CD8-positive, alpha-beta T cell (primary cell): ENCODE measurements at regions of chr12 and their contacts with region 1.

Region 1: GRCh38 chr12:54214553-54215406 is 26.0 kb upstream of the SMUG1 start:
- DNase-seq: peak; percentile 78 to 96 (median 91)
- ATAC-seq: peak; percentile 86
- H3K4me3 ChIP-seq: peak overlapping the region; percentile 34 to 47
- H3K4me3 Mint-ChIP-seq: peak overlapping the region; percentile 72
- H3K27ac ChIP-seq: no peak overlapping the region
- H3K27ac Mint-ChIP-seq: no peak overlapping the region
- H3K4me1 ChIP-seq: peaks cover 30% of the 10 kb centered on the region
- H3K4me1 Mint-ChIP-seq: peaks cover 35% of the 10 kb centered on the region
- H3K27me3 ChIP-seq: peaks cover 0 to 7% of the 10 kb centered on the region in 2 experiments
- H3K27me3 Mint-ChIP-seq: peaks cover 22% of the 10 kb centered on the region
- CTCF ChIP-seq: peak; percentile 99

Region 2: DNA sequence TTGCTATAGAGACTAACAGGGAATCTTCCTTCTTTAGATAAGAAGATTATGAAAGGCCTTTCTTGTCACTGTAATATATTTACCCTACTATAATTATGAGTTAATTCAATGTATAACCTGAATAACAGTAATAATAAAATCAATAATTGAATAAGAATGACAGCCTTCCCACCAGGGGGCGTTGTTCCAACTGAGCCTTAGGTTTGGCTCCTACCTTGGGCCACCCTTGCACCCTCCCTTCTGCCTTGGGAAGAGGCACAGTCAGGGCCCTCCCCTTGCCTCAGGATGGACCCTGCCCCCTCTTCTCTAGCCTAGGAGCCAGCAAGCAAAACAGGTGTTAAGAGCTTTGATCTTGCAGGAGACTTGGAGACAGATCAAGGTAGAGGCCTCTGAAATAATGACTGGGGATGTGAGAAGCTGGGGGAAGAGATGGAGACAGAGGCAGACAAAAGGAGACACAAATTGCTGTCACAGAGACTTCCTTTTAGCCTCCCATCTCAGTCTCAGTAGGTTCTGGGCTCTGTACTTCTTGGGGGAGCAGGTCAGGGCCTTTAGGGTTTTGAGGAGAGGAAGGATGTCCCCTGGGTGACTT is 422.9 kb before region 1 on chr12:
- CTCF ChIA-PET with region 1: no interaction called
- POLR2A ChIA-PET with region 1: no interaction called
- intact Hi-C with region 1: loop called (anchors 5 kb)
- DNase-seq: peak in 8 of 9 experiments; percentile 1 to 53 (median 33)
- ATAC-seq: no peak
- H3K4me3 ChIP-seq: no peak overlapping the region
- H3K4me3 Mint-ChIP-seq: no peak overlapping the region
- H3K27ac ChIP-seq: no peak overlapping the region
- H3K27ac Mint-ChIP-seq: no peak overlapping the region
- H3K4me1 ChIP-seq: no peaks in the 10 kb centered on the region
- H3K4me1 Mint-ChIP-seq: no peaks in the 10 kb centered on the region
- H3K27me3 ChIP-seq: peaks cover 0 to 4% of the 10 kb centered on the region in 2 experiments
- H3K27me3 Mint-ChIP-seq: peaks cover 17% of the 10 kb centered on the region
- CTCF ChIP-seq: peak; percentile 54

Region 3: GRCh38 chr12:54005853-54006686 is 208.7 kb before region 1 on chr12:
- CTCF ChIA-PET with region 1: interaction called, 141 read pairs
- POLR2A ChIA-PET with region 1: no interaction called
- intact Hi-C with region 1: loop called in 1 of 2 experiments (anchors 1 kb)
- DNase-seq: peak; percentile 71 to 92 (median 86)
- ATAC-seq: peak; percentile 80
- H3K4me3 ChIP-seq: peak overlapping the region; percentile 24 to 62
- H3K4me3 Mint-ChIP-seq: peak overlapping the region; percentile 82
- H3K27ac ChIP-seq: no peak overlapping the region
- H3K27ac Mint-ChIP-seq: no peak overlapping the region
- H3K4me1 ChIP-seq: peaks cover 22% of the 10 kb centered on the region
- H3K4me1 Mint-ChIP-seq: peaks cover 25% of the 10 kb centered on the region
- H3K27me3 ChIP-seq: peaks cover 72 to 85% of the 10 kb centered on the region in 2 experiments
- H3K27me3 Mint-ChIP-seq: peaks cover 87% of the 10 kb centered on the region
- CTCF ChIP-seq: peak; percentile 93

Region 4: GRCh38 chr12:54017878-54018467 is 196.8 kb before region 1 on chr12:
- CTCF ChIA-PET with region 1: interaction called, 12 read pairs
- POLR2A ChIA-PET with region 1: no interaction called
- intact Hi-C with region 1: no loop called
- DNase-seq: peak; percentile 53 to 91 (median 70)
- ATAC-seq: peak; percentile 86
- H3K4me3 ChIP-seq: peak overlapping the region; percentile 69 to 71
- H3K4me3 Mint-ChIP-seq: peak overlapping the region; percentile 83
- H3K27ac ChIP-seq: peak overlapping the region in 1 of 2 experiments; percentile 56
- H3K27ac Mint-ChIP-seq: no peak overlapping the region
- H3K4me1 ChIP-seq: peaks cover 16% of the 10 kb centered on the region
- H3K4me1 Mint-ChIP-seq: peaks cover 22% of the 10 kb centered on the region
- H3K27me3 ChIP-seq: peaks cover 41 to 48% of the 10 kb centered on the region in 2 experiments
- H3K27me3 Mint-ChIP-seq: peaks cover 71% of the 10 kb centered on the region
- CTCF ChIP-seq: no peak

Region 5: DNA sequence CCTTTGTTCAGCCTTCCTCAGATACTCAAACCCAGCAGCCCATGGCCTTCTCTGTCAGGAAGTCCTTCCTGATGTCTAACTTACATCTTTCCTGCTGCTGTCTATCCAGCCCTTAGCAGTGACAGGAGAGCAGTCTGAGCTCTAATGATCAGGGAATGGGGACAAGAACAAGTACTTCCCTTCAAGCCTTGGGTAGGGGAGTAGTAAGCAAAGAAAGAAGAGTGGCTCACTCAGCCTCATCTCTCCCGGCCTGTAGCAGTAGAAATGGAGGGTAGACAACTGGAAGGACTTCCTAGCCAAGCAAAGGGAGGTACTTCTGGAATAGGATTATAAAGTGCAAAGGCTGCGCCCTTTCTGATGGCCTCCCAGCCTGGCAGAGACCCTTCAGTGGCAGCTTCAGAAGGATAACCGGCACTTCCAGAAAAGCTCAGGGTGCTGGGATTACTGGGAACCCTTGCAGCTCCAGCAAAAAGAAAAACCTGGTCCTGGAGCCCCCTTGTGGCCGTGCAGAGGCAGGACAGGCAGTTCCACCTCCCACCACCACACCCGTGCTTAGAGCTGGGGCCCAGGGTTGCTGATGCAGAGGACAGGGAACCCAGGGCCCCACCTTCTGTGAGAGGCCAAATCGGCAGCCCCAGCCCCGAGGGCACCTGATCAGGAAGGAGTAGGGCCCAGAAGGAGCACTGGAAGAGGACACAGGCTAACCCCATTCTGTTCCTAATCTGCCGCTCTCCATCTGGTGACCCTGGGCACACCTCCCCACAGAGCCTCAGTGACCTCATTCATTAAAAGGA is 13.6 kb before region 1 on chr12:
- CTCF ChIA-PET with region 1: interaction called, 63 read pairs
- POLR2A ChIA-PET with region 1: interaction called, 3 read pairs
- intact Hi-C with region 1: loop called in 1 of 2 experiments (anchors 1 kb)
- DNase-seq: peak; percentile 35 to 78 (median 62)
- ATAC-seq: peak; percentile 98
- H3K4me3 ChIP-seq: no peak overlapping the region
- H3K4me3 Mint-ChIP-seq: no peak overlapping the region
- H3K27ac ChIP-seq: no peak overlapping the region
- H3K27ac Mint-ChIP-seq: no peak overlapping the region
- H3K4me1 ChIP-seq: no peaks in the 10 kb centered on the region
- H3K4me1 Mint-ChIP-seq: no peaks in the 10 kb centered on the region
- H3K27me3 ChIP-seq: peaks cover 10 to 24% of the 10 kb centered on the region in 2 experiments
- H3K27me3 Mint-ChIP-seq: peaks cover 70% of the 10 kb centered on the region
- CTCF ChIP-seq: peak; percentile 90

Region 6: DNA sequence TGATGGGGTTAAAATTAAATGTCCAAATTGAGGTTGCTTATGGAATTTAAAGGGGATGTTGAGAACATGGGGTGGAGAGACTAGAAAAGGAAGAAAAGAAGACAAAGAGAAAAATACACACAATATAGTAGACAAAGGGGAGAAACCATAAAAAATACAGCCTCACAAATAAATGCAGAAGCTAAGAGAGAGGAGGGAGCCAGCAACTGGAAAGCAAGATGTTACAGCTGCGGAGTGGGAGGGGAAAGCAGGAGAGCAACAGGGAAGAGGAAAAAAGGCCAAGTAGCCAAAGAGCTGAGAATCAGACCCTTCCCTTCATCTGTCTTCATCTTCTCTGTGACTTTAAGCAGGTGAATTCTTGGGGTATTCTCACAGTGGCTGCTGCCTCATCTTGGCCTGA is 13.7 kb after region 1 on chr12:
- CTCF ChIA-PET with region 1: interaction called, 10 read pairs
- POLR2A ChIA-PET with region 1: no interaction called
- intact Hi-C with region 1: no loop called
- DNase-seq: no peak
- ATAC-seq: no peak
- H3K4me3 ChIP-seq: no peak overlapping the region
- H3K4me3 Mint-ChIP-seq: no peak overlapping the region
- H3K27ac ChIP-seq: no peak overlapping the region
- H3K27ac Mint-ChIP-seq: no peak overlapping the region
- H3K4me1 ChIP-seq: no peaks in the 10 kb centered on the region
- H3K4me1 Mint-ChIP-seq: peaks cover 4% of the 10 kb centered on the region
- H3K27me3 ChIP-seq: no peaks in the 10 kb centered on the region
- H3K27me3 Mint-ChIP-seq: no peaks in the 10 kb centered on the region
- CTCF ChIP-seq: no peak

Region 7: DNA sequence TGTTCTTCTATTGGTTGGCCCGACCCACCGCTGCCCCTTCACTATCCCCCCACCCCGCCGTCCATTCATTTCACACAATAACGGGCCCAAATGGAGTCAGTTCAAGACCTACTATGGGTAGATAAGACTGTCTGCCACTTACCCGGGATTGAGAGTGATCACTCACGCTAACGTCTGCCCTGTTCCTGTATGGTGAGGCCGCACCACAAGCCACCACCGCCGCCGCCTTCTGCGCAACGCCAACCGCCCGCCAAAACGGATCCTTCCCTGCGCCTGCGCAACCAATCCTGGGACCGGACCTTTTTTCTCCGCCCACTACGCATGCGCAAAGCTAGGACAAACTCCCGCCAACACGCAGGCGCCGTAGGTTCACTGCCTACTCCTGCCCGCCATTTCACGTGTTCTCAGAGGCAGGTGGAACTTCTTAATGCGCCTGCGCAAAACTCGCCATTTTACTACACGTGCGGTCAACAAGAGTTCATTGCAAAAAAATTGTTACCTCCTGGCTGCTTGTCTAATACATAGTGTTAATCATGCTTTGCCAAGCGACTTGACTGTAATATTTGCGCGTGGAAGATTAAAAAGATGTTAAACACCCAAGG is 65.2 kb after region 1 on chr12 and contains the start of gene CBX5:
- CTCF ChIA-PET with region 1: no interaction called
- POLR2A ChIA-PET with region 1: interaction called, 4 read pairs
- intact Hi-C with region 1: loop called (anchors 1 to 2 kb)
- DNase-seq: peak; percentile 99 to 100 (median 100)
- ATAC-seq: peak; percentile 47
- H3K4me3 ChIP-seq: peak within 1 kb of the TSS; percentile 83 to 93
- H3K4me3 Mint-ChIP-seq: no peak within 1 kb of the TSS
- H3K27ac ChIP-seq: peak within 1 kb of the TSS; percentile 92 to 100
- H3K27ac Mint-ChIP-seq: no peak within 1 kb of the TSS
- H3K4me1 ChIP-seq: peaks cover 52% of the 10 kb centered on the region
- H3K4me1 Mint-ChIP-seq: peaks cover 14% of the 10 kb centered on the region
- H3K27me3 ChIP-seq: no peaks in the 10 kb centered on the region
- H3K27me3 Mint-ChIP-seq: no peaks in the 10 kb centered on the region
- CTCF ChIP-seq: no peak
- total RNA-seq, gene CBX5: 26.1 to 26.7 TPM